KBM-7 (cell line): ENCODE measurements at regions of chr2 and their contacts with region 1.

Region 1: DNA sequence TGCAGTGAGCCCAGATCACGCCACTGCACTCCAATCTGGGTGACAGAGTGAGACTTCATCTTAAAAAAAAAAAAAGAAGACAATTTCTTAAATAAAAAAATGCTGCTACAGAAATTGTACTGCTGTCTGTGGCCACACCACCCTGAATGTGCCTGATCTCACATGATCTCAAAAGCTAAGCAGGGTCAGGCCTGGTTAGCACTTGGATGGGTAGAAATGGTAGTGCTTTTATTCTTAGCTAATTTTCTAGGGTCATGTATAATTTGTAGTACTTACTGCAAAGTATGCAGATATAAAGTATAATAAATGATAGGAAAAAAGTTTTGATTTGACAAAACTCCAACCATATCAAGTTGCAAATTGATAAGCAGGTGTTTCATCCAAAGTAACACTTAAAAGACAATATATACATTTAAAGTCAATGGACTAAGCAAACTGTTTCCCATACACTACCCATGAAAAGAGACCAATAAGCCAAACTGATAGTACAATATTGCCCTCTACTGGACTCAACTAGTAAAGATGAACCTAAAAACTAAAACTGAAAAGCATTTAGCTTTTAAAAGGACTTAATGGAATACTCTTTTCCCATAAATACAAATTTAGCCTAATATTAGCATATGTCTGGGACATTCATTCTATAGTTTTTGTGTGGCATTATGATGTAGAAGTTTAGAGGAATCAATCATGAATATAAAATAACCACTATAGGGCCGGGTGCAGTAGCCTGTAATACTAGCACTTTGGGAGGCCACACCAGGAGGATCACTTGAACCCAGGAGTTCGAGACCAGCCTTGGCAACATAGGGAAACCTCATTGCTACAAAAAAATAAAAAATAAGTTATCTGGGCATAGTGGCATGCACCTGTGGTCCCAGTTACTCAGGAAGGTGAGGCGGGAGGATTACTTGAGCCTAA is 18.6 kb upstream of the PEX13 start:
- DNase-seq: peak; percentile 78

Region 2: GRCh38 chr2:60806988-60807681 is 191.8 kb before region 1 on chr2:
- in situ Hi-C with region 1: loop called (anchors 25 kb)
- DNase-seq: peak; percentile 86